ENCODE measurements at regions of chr1 and their contacts with region 1.

Region 1: DNA sequence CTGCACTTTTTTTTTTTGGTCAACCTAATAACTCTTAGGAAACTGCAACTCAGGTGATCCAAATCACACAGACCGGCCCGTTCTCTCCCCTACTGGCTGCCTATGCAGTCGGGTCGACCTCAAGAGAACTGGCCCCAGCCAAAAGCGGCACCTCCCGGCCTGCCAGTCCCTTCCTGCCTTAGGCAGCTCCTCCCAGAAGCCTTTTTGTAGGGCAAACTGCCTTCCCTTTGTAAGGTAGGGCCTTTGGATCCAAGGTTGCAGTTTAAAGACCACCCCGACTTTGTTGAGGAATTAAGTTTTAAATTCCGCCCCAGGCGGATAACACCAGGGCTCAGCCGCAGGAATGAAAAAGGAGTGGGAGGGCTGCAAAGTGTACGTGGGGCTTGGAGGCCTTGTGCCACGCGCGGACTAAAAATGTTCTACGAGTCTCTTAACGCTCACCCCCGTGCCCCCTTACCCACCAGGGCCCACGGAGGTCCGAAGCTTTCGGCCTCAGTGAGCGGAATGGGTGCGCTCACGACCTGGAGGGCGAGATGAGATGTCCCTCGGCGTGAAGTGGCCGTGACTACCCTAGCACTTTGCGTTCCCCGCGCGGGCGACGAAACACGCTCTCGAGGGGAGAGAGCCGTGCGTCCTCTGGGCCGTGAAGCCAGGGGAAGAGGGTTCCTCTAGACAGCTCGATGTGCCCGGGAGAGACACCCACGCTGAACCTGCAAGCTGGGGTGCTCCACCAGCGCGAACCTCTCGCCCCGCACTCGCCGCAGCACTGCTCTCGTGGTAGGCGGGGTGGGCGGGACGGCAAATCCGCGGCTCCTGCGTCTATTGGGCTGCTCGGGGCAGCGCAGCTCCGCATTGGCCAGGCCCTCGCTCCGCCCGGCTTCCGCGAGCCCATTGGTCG is 489 bp upstream of the ST3GAL3 start:
- DNase-seq: peak; percentile 98
- H3K4me3 Mint-ChIP-seq: peak overlapping the region; percentile 93
- H3K27ac Mint-ChIP-seq: peak overlapping the region; percentile 89
- H3K4me1 Mint-ChIP-seq: peaks cover 32% of the 10 kb centered on the region
- H3K27me3 Mint-ChIP-seq: no peaks in the 10 kb centered on the region

Region 2: DNA sequence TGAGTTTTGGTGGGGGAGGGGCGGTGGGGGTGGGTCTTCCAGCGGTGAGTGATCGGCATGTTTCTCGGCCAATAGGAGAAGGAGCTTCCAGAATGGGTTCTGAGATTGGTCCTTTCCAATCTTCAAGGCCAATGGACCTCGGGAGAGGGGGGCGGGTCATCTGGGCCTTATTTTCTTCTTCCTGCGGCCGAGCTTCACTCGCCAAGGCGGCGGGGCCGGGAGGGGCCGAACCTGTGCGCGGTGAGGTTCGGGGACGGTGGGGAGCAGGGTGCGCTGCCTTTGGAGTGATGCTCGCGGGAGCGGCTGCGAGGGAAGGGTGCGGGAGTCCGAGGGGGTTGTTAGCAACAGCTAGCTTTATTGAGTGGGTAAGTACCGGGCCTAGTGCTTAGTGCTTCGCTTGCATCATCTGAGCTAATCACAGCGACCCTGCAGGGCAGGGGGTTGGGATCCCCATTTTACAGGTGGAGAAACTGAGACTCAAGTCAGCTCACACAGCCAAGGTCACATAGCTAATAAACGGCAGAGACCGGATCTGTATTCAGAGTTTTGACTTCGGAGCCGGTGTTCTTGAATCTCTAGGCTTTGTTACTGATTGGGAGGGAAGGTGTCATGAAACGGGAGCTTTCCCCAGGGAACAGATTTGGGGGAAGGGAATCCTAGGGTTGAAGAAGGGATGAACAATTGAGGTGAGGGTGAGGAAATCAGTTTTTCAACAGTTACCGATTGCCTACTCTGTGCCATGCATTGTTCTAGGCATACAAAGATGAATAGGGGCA is 56.3 kb before region 1 on chr1:
- intact Hi-C with region 1: loop called (anchors 1 kb)
- DNase-seq: peak; percentile 97
- H3K4me3 Mint-ChIP-seq: peak overlapping the region; percentile 91
- H3K27ac Mint-ChIP-seq: peak overlapping the region; percentile 98
- H3K4me1 Mint-ChIP-seq: peaks cover 25% of the 10 kb centered on the region
- H3K27me3 Mint-ChIP-seq: peaks cover 5% of the 10 kb centered on the region

Region 3: DNA sequence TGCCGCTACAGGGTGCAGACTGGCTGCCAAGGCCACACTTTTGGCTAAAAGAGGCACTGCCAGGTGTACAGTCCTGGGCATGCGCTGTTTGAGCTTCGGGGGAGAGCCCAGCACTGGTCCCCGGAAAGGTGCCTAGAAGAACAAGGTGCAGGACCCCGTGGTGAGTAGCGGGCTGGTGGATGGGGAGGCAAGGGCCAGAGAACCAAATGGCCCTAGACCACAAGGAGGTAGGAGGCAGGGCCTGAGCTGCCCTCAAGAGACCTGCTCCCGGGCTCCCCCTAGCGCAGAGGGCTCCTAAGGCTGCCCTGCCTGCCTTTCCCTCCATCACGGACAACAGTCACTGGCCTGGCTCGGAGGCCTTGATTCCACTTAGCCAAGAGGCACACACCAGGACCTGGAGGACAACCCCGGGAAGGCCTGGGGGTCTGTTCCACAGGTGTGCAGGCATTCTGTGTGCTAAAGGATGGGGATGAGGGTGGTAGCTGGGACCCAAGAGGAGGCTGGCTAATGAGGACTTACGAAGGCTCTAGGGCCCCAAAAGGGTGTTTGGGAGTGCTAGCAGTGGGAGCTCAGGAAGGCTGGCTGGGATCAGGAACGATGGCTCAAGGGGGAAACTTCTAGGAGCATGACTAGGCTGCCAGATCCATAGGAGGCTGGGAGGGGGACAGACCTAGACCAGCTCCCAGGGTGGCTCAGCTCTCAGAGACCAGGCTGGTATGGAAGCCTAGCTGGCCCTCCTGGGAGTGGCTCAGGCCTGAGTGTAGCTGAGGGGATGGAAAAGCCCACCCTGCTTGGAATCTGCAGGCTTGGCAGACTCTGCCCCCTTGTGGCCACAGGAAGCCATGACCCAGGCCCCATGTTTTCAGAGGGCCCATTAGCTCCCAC is 227.5 kb after region 1 on chr1:
- intact Hi-C with region 1: loop called (anchors 5 kb)
- DNase-seq: peak; percentile 87
- H3K4me3 Mint-ChIP-seq: peak overlapping the region; percentile 23
- H3K27ac Mint-ChIP-seq: no peak overlapping the region
- H3K4me1 Mint-ChIP-seq: peaks cover 11% of the 10 kb centered on the region
- H3K27me3 Mint-ChIP-seq: peaks cover 9% of the 10 kb centered on the region

Region 4: GRCh38 chr1:43974443-43975248 is 267.8 kb after region 1 on chr1 and contains the start of gene ATP6V0B:
- intact Hi-C with region 1: loop called (anchors 2 kb)
- DNase-seq: peak; percentile 99
- H3K4me3 Mint-ChIP-seq: peak within 1 kb of the TSS; percentile 91
- H3K27ac Mint-ChIP-seq: peak within 1 kb of the TSS; percentile 86
- H3K4me1 Mint-ChIP-seq: peaks cover 49% of the 10 kb centered on the region
- H3K27me3 Mint-ChIP-seq: no peaks in the 10 kb centered on the region
- total RNA-seq, gene ATP6V0B: 181 and 182 TPM in 2 replicates